Calu3 (cell line): ENCODE measurements at regions of chr1 and their contacts with region 1.

Region 1: DNA sequence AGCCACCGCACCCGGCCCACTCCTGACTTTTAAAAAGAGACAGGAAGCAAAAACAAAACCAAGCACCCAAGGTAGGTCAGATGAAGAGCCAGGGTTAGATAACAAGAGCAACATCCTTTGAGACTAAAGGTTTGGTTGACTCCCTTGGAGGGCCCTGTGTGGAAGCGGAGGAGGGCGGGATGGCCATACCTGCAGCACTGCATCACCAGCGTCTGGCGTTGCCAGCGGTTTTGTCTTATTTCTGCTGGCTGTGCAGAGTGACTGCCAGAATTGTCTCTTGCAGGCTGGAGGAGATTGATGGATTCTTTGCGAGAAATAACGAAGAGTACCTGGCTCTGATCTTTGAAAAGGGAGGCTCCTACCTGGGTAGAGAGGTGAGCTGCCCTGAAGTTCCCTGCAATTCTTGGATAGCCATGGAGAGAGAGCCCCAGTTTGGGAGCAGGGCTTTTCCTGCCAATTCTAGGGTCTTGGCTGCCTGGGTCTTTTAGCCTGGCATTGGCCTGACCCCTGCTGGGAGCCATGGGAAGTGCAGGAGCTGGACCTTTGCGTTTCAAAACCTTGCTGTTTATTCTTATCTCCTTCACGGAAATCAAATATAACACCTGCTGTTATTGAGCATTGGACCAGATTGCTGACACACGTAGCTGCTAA is 24.0 kb downstream of the QSOX1 start:
- DNase-seq: peak; percentile 86
- H3K4me3 Mint-ChIP-seq: no peak overlapping the region
- H3K27ac Mint-ChIP-seq: peak overlapping the region; percentile 31
- H3K4me1 Mint-ChIP-seq: no peaks in the 10 kb centered on the region
- H3K27me3 Mint-ChIP-seq: no peaks in the 10 kb centered on the region
- CTCF ChIP-seq: peak; percentile 96

Region 2: GRCh38 chr1:179706339-179706941 is 472.2 kb before region 1 on chr1:
- CTCF ChIA-PET with region 1: interaction called, 4 read pairs
- intact Hi-C with region 1: loop called (anchors 2 kb)
- DNase-seq: peak; percentile 77
- H3K4me3 Mint-ChIP-seq: no peak overlapping the region
- H3K27ac Mint-ChIP-seq: no peak overlapping the region
- H3K4me1 Mint-ChIP-seq: peaks cover 9% of the 10 kb centered on the region
- H3K27me3 Mint-ChIP-seq: peaks cover 57% of the 10 kb centered on the region
- CTCF ChIP-seq: peak; percentile 82

Region 3: DNA sequence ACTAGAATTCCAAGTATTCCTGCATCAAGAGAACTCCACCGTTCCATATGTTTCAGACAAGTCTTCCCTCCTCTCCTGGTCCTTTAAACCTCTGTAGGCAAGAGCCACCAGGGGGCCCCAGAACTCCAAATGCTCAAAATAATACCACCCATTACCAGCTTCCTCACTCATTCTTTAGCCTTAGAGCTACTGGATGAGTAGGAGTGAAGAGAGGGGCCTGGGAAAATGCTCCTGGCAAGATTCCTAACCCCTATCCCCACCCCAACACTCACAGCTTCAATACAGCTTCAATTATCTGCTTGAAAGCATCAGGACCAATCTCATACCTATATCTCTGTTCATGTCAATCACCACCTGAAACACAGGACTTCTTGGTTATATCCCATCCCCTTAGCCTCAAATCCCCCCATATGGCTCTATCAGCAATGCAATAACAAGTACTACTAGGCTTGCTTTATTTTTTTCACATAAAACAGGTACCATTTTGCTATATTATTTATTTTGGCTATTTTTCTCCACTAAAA is 310.8 kb before region 1 on chr1:
- CTCF ChIA-PET with region 1: interaction called, 6 read pairs
- intact Hi-C with region 1: loop called (anchors 5 kb)
- DNase-seq: peak; percentile 68
- H3K4me3 Mint-ChIP-seq: no peak overlapping the region
- H3K27ac Mint-ChIP-seq: no peak overlapping the region
- H3K4me1 Mint-ChIP-seq: peaks cover 10% of the 10 kb centered on the region
- H3K27me3 Mint-ChIP-seq: no peaks in the 10 kb centered on the region
- CTCF ChIP-seq: peak; percentile 80

Region 4: DNA sequence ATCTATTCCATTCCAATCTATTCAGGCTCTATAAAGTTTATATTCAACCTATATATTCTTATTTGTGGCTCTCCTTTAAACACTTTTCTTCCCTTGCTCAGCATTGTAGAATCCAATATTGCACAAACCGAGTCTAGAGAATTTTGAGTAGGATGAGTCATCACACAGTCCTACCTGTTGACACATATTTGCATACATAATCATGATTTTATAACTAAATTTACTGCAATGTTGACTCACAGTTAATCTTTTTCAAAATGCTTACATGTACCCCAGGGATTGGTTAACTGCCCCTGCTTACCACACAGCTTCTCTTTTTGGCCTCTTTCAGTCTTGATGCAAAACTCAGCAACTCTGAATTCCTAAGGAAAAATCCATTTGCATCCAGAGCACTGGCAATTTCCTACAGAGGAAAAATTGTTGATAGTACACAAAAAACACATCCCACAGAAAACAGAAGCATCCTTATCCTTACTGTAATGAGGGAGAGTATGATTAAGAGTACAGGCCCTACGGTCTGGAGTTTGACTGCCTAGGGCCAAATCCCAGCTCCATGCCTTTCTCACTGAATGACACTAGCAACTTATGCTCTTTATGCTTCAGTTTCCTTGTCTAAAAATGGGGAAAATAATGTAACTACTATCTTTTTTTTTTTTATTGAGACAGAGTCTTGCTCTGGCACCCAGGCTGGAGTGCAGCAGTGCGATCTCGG is 252.0 kb before region 1 on chr1:
- CTCF ChIA-PET with region 1: no interaction called
- intact Hi-C with region 1: no loop called
- DNase-seq: no peak
- H3K4me3 Mint-ChIP-seq: no peak overlapping the region
- H3K27ac Mint-ChIP-seq: no peak overlapping the region
- H3K4me1 Mint-ChIP-seq: peaks cover 32% of the 10 kb centered on the region
- H3K27me3 Mint-ChIP-seq: no peaks in the 10 kb centered on the region
- CTCF ChIP-seq: no peak

Region 5: GRCh38 chr1:180062452-180062975 is 116.1 kb before region 1 on chr1:
- CTCF ChIA-PET with region 1: no interaction called
- intact Hi-C with region 1: loop called (anchors 10 kb)
- DNase-seq: no peak
- H3K4me3 Mint-ChIP-seq: no peak overlapping the region
- H3K27ac Mint-ChIP-seq: no peak overlapping the region
- H3K4me1 Mint-ChIP-seq: no peaks in the 10 kb centered on the region
- H3K27me3 Mint-ChIP-seq: no peaks in the 10 kb centered on the region
- CTCF ChIP-seq: no peak

Region 6: GRCh38 chr1:180101411-180101810 is 77.2 kb before region 1 on chr1:
- CTCF ChIA-PET with region 1: no interaction called
- intact Hi-C with region 1: loop called (anchors 5 kb)
- DNase-seq: no peak
- H3K4me3 Mint-ChIP-seq: no peak overlapping the region
- H3K27ac Mint-ChIP-seq: no peak overlapping the region
- H3K4me1 Mint-ChIP-seq: peaks cover 7% of the 10 kb centered on the region
- H3K27me3 Mint-ChIP-seq: no peaks in the 10 kb centered on the region
- CTCF ChIP-seq: no peak

Region 7: DNA sequence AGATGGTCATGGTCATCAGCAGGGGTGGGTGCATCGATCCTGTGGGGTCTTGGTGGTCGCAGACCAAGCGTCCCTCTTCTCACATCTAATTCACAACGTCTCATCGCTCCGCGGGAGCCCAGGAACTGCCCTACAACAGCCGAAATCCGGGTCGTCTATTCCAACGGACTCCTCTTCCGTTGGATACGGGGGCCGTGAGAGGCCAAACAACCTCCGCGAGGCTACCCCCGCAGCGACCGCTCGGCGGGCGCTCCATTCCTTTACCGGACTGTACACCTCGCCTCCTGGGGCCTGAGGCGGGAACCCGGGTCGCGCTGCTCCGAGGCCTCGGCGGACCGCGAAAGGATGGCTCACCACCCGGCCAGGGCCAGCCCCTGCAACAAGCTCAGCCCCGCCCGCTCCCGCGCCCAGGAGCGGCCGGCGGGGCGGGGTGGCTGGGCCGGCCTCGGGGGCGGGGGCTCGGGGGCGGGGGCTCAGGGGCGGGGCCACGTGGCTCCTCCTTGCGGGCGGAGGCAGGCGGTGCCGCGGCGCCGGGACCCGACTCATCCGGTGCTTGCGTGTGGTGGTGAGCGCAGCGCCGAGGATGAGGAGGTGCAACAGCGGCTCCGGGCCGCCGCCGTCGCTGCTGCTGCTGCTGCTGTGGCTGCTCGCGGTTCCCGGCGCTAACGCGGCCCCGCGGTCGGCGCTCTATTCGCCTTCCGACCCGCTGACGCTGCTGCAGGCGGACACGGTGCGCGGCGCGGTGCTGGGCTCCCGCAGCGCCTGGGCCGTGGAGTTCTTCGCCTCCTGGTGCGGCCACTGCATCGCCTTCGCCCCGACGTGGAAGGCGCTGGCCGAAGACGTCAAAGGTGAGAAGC is 24.1 kb before region 1 on chr1 and contains the start of gene QSOX1:
- CTCF ChIA-PET with region 1: interaction called, 10 read pairs
- intact Hi-C with region 1: no loop called
- DNase-seq: peak; percentile 91
- H3K4me3 Mint-ChIP-seq: peak within 1 kb of the TSS; percentile 99
- H3K27ac Mint-ChIP-seq: peak within 1 kb of the TSS; percentile 79
- H3K4me1 Mint-ChIP-seq: peaks cover 73% of the 10 kb centered on the region
- H3K27me3 Mint-ChIP-seq: no peaks in the 10 kb centered on the region
- CTCF ChIP-seq: no peak
- total RNA-seq, gene QSOX1: 462 and 505 TPM in 2 replicates